CD4-positive, alpha-beta T cell (primary cell): ENCODE measurements at regions of chr10 and their contacts with region 1.

Region 1: GRCh38 chr10:72337020-72337629 is 17.6 kb downstream of the DNAJB12 start:
- DNase-seq: peak in 13 of 14 experiments; percentile 49 to 81 (median 64)
- ATAC-seq: no peak
- H3K4me3 ChIP-seq: no peak overlapping the region
- H3K4me3 Mint-ChIP-seq: no peak overlapping the region
- H3K27ac ChIP-seq: no peak overlapping the region
- H3K27ac Mint-ChIP-seq: peak overlapping the region; percentile 94
- H3K4me1 ChIP-seq: peaks cover 65% of the 10 kb centered on the region
- H3K4me1 Mint-ChIP-seq: peaks cover 65% of the 10 kb centered on the region
- H3K27me3 ChIP-seq: no peaks in the 10 kb centered on the region
- H3K27me3 Mint-ChIP-seq: no peaks in the 10 kb centered on the region
- CTCF ChIP-seq: peak; percentile 99

Region 2: DNA sequence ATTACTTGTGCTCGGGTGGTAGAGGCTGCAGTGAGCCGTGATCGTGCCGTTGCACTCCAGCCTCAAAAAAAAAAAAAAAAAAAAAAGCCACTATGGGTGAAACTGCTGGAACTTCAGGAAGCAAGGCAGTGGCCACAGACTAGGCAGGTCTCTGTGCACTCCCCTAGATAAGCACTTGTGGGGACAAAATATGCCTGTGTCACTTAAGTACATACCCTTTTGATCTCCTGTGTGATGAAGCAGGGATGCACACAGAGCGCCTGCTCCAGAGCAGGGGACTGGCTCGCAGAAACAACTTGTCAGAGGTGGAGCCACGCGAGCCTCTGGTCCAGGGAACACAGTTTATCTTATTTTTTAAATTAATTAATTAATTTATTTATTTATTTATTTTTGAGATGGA is 443.2 kb before region 1 on chr10:
- CTCF ChIA-PET with region 1: interaction called, 3 read pairs
- POLR2A ChIA-PET with region 1: no interaction called
- intact Hi-C with region 1: loop called (anchors 1 to 2 kb)
- DNase-seq: no peak
- ATAC-seq: no peak
- H3K4me3 ChIP-seq: no peak overlapping the region
- H3K4me3 Mint-ChIP-seq: no peak overlapping the region
- H3K27ac ChIP-seq: no peak overlapping the region
- H3K27ac Mint-ChIP-seq: no peak overlapping the region
- H3K4me1 ChIP-seq: peaks cover 14% of the 10 kb centered on the region
- H3K4me1 Mint-ChIP-seq: peaks cover 21% of the 10 kb centered on the region
- H3K27me3 ChIP-seq: no peaks in the 10 kb centered on the region
- H3K27me3 Mint-ChIP-seq: no peaks in the 10 kb centered on the region
- CTCF ChIP-seq: no peak

Region 3: GRCh38 chr10:71957546-71958275 is 379.4 kb before region 1 on chr10:
- CTCF ChIA-PET with region 1: no interaction called
- POLR2A ChIA-PET with region 1: no interaction called
- intact Hi-C with region 1: loop called (anchors 5 kb)
- DNase-seq: no peak
- ATAC-seq: no peak
- H3K4me3 ChIP-seq: no peak overlapping the region
- H3K4me3 Mint-ChIP-seq: no peak overlapping the region
- H3K27ac ChIP-seq: no peak overlapping the region
- H3K27ac Mint-ChIP-seq: no peak overlapping the region
- H3K4me1 ChIP-seq: no peaks in the 10 kb centered on the region
- H3K4me1 Mint-ChIP-seq: no peaks in the 10 kb centered on the region
- H3K27me3 ChIP-seq: peaks cover 1 to 7% of the 10 kb centered on the region in 2 experiments
- H3K27me3 Mint-ChIP-seq: peaks cover 22% of the 10 kb centered on the region
- CTCF ChIP-seq: no peak

Region 4: DNA sequence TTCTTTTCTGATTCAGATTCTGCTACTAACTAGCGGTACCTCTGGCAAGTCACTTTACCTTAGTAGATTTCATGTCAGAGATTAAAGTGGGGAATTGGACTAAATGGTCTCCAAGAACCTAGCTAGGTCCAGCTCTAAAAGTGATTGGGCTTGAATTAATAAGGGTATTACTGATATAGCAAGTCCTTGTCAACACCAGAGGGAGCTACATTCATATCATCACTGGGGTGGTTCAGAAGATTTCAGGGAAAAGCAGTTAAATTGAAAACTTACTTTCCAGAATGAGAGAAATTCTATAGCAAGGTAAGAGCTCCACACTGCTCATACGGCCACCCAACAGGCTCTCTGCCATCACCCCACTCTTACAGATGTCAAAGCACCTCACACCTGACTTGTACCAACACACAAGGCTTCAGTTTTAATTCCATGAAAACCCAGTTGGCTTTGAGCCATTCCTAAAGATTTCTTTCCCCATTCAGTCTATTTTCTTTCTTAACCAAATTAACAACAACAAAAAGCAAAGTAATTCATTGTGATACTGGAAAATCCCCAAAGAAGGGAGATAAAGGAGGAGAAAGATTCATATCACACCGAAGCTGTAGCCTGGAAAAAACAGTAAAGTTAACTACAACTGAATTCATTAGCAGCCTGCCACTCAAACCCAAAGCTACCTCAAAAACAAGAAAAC is 210.8 kb before region 1 on chr10:
- CTCF ChIA-PET with region 1: interaction called, 30 read pairs
- POLR2A ChIA-PET with region 1: interaction called, 3 read pairs
- intact Hi-C with region 1: loop called (anchors 2 kb)
- DNase-seq: peak in 3 of 14 experiments; percentile 53 to 60 (median 58)
- ATAC-seq: peak; percentile 26
- H3K4me3 ChIP-seq: no peak overlapping the region
- H3K4me3 Mint-ChIP-seq: no peak overlapping the region
- H3K27ac ChIP-seq: no peak overlapping the region
- H3K27ac Mint-ChIP-seq: peak overlapping the region; percentile 43
- H3K4me1 ChIP-seq: peaks cover 11% of the 10 kb centered on the region
- H3K4me1 Mint-ChIP-seq: peaks cover 58% of the 10 kb centered on the region
- H3K27me3 ChIP-seq: no peaks in the 10 kb centered on the region
- H3K27me3 Mint-ChIP-seq: no peaks in the 10 kb centered on the region
- CTCF ChIP-seq: peak; percentile 42

Region 5: GRCh38 chr10:72223743-72224101 is 113.4 kb before region 1 on chr10:
- CTCF ChIA-PET with region 1: interaction called, 12 read pairs
- POLR2A ChIA-PET with region 1: interaction called, 3 read pairs
- intact Hi-C with region 1: loop called in 1 of 2 experiments (anchors 2 kb)
- DNase-seq: peak in 2 of 14 experiments; percentile 48 to 53
- ATAC-seq: no peak
- H3K4me3 ChIP-seq: no peak overlapping the region
- H3K4me3 Mint-ChIP-seq: peak overlapping the region; percentile 7
- H3K27ac ChIP-seq: no peak overlapping the region
- H3K27ac Mint-ChIP-seq: peak overlapping the region; percentile 53
- H3K4me1 ChIP-seq: peaks cover 44% of the 10 kb centered on the region
- H3K4me1 Mint-ChIP-seq: peaks cover 54% of the 10 kb centered on the region
- H3K27me3 ChIP-seq: no peaks in the 10 kb centered on the region
- H3K27me3 Mint-ChIP-seq: no peaks in the 10 kb centered on the region
- CTCF ChIP-seq: no peak

Region 6: DNA sequence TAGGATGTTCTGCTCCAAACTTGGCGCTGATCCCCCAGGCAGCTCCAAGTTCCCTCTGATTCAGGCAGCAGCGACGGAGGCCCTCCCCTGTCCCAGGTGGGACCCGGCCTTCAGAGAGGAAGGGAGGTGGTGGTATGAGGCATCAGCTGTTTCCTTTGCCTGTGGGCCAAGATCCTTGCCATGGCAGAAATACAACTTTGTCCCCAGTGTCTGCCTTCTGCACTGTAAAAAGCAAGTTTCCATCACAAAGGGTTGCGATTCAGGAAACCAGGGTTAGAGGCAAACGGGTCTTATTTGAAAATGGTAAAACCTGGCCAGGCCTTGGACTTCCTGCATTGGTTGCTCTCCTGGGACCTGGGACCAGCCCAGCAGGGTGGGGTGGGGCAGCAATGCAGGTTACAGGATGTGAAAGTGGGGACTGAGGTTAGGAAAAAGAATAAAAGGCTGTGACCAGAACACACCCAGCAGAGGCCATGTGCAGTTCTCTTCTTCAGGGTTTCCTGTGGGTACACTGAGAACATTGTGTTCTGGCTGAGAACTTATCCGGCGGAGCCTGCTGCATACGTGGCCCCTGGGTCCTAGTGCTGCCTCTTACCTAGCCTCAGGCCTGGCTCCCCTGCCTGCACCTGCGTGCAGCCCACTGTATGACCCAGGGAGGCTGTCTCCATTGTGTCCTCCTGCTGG is 88.5 kb before region 1 on chr10:
- CTCF ChIA-PET with region 1: interaction called, 13 read pairs
- POLR2A ChIA-PET with region 1: interaction called, 14 read pairs
- intact Hi-C with region 1: loop called (anchors 1 to 5 kb)
- DNase-seq: peak; percentile 54 to 96 (median 64)
- ATAC-seq: peak; percentile 87
- H3K4me3 ChIP-seq: peak overlapping the region; percentile 31
- H3K4me3 Mint-ChIP-seq: peak overlapping the region; percentile 85
- H3K27ac ChIP-seq: peak overlapping the region; percentile 20 to 62
- H3K27ac Mint-ChIP-seq: peak overlapping the region; percentile 96
- H3K4me1 ChIP-seq: peaks cover 99% of the 10 kb centered on the region
- H3K4me1 Mint-ChIP-seq: peaks cover 86% of the 10 kb centered on the region
- H3K27me3 ChIP-seq: no peaks in the 10 kb centered on the region
- H3K27me3 Mint-ChIP-seq: no peaks in the 10 kb centered on the region
- CTCF ChIP-seq: no peak

Region 7: DNA sequence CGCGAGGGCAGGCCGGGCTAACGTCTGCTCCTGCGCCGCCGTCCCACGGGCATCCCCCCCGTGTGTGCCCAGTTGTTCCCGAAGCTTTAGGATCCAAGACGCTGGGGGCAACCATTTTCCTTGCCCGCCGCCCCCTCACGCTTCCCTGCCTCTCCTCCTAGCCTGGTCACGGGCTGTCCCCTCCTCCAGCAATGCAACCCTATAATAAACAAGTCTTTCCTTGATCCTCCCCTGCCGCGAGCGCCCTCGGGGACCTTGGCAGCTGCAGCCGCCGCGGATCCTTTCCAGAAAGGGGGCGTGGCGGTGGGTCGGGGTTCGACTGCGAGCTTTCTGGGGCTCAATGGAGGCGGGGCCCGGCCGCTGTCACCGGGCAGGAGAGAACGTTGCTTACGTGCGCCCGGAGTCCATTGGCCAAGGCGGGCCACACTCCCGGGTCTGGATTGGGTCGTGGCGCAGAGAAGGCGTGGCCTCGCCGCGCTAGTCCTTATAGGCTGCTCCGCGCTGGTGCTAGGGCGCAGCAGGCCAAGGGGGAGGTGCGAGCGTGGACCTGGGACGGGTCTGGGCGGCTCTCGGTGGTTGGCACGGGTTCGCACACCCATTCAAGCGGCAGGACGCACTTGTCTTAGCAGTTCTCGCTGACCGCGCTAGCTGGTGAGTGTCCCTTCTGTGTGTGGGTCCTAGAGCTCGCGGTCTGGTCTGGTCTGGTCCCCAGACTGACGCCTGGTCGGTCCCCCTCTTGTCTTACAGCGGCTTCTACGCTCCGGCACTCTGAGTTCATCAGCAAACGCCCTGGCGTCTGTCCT is 63.5 kb before region 1 on chr10 and contains the start of gene DDIT4:
- CTCF ChIA-PET with region 1: interaction called, 54 read pairs
- POLR2A ChIA-PET with region 1: interaction called, 33 read pairs
- intact Hi-C with region 1: loop called (anchors 1 kb)
- DNase-seq: peak; percentile 94 to 99 (median 97)
- ATAC-seq: peak; percentile 93
- H3K4me3 ChIP-seq: peak within 1 kb of the TSS; percentile 90
- H3K4me3 Mint-ChIP-seq: peak within 1 kb of the TSS; percentile 100
- H3K27ac ChIP-seq: peak within 1 kb of the TSS; percentile 78 to 88
- H3K27ac Mint-ChIP-seq: peak within 1 kb of the TSS; percentile 89
- H3K4me1 ChIP-seq: peaks cover 48% of the 10 kb centered on the region
- H3K4me1 Mint-ChIP-seq: peaks cover 64% of the 10 kb centered on the region
- H3K27me3 ChIP-seq: no peaks in the 10 kb centered on the region
- H3K27me3 Mint-ChIP-seq: no peaks in the 10 kb centered on the region
- CTCF ChIP-seq: no peak
- total RNA-seq, gene DDIT4: 427 to 436 TPM

Region 8: GRCh38 chr10:72379062-72379461 is 41.9 kb after region 1 on chr10:
- CTCF ChIA-PET with region 1: no interaction called
- POLR2A ChIA-PET with region 1: no interaction called
- intact Hi-C with region 1: no loop called
- DNase-seq: no peak
- ATAC-seq: no peak
- H3K4me3 ChIP-seq: no peak overlapping the region
- H3K4me3 Mint-ChIP-seq: no peak overlapping the region
- H3K27ac ChIP-seq: no peak overlapping the region
- H3K27ac Mint-ChIP-seq: no peak overlapping the region
- H3K4me1 ChIP-seq: no peaks in the 10 kb centered on the region
- H3K4me1 Mint-ChIP-seq: no peaks in the 10 kb centered on the region
- H3K27me3 ChIP-seq: no peaks in the 10 kb centered on the region
- H3K27me3 Mint-ChIP-seq: no peaks in the 10 kb centered on the region
- CTCF ChIP-seq: no peak

Region 9: DNA sequence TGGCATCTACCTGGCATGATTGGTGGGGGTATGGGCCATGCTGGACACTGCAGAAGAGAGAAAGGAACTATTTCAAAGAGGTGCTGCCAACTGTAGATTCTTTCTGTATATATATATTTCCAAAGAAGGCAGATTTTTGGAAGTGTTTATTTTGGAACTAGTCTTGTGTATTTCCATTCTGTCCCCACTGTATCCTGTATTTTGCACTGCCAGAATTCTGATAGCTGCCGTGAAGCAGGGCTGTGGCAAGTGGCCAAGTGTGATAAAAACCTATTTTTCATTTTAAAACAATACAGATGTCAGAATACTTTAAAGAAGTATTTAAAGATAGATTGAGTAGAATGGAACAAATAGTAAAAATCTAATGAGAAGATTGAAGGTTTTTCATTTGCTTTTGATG is 371.9 kb after region 1 on chr10:
- CTCF ChIA-PET with region 1: no interaction called
- POLR2A ChIA-PET with region 1: no interaction called
- intact Hi-C with region 1: no loop called
- DNase-seq: no peak
- ATAC-seq: no peak
- H3K4me3 ChIP-seq: no peak overlapping the region
- H3K4me3 Mint-ChIP-seq: no peak overlapping the region
- H3K27ac ChIP-seq: no peak overlapping the region
- H3K27ac Mint-ChIP-seq: no peak overlapping the region
- H3K4me1 ChIP-seq: no peaks in the 10 kb centered on the region
- H3K4me1 Mint-ChIP-seq: no peaks in the 10 kb centered on the region
- H3K27me3 ChIP-seq: no peaks in the 10 kb centered on the region
- H3K27me3 Mint-ChIP-seq: no peaks in the 10 kb centered on the region
- CTCF ChIP-seq: no peak

Region 10: GRCh38 chr10:72802763-72803505 is 465.8 kb after region 1 on chr10:
- CTCF ChIA-PET with region 1: no interaction called
- POLR2A ChIA-PET with region 1: no interaction called
- intact Hi-C with region 1: no loop called
- DNase-seq: no peak
- ATAC-seq: no peak
- H3K4me3 ChIP-seq: no peak overlapping the region
- H3K4me3 Mint-ChIP-seq: no peak overlapping the region
- H3K27ac ChIP-seq: no peak overlapping the region
- H3K27ac Mint-ChIP-seq: no peak overlapping the region
- H3K4me1 ChIP-seq: peaks cover 7% of the 10 kb centered on the region
- H3K4me1 Mint-ChIP-seq: peaks cover 27% of the 10 kb centered on the region
- H3K27me3 ChIP-seq: no peaks in the 10 kb centered on the region
- H3K27me3 Mint-ChIP-seq: no peaks in the 10 kb centered on the region
- CTCF ChIP-seq: no peak